HepG2 (cell line): ENCODE measurements at regions of chr18 and their contacts with region 1.

Region 1: DNA sequence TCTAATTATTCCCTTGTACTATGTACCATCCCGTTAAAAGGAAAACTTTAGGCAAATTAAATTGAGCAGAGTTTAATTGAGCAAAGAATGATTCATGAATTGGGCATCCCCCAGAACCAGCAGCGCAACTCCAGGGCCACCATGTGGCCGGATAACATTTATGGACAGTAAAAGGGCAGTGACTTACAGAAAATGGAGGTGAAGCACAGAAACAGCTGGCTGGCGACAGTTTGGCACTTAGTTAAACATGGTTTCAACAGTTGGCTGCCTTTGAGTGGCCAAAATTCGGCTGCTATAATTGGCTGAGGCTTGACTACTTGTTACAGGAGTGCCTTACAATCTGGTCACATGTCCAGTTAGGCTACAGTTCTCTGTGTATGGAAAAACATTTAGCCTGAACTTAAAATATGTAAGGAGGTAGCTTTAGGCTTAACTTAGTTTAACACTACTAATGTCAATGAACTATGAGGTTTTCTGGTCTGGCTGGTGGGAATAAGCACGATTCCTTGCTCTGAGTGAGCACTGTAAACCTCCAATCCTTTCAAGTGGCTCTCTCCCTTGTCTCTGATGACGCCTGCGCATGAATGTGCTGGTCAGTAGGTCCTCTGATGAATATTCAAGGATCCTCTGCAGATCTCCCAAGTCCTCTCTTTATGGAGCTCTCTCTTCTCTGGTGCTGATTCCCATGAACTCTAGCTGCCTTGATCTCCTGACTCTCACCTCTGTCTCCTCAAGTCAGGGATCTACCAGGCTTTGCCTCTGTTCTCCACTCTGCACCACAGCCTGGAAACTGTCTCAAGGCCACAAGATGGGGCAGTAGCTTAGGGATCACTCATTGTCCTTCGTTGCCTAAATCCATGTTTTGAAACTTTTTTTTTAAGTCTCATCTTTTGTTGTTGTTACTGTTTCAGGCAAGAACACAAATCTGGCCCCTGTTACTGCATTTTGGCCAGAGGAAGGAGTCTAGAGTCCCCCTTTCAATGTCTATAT is 24.4 kb upstream of the RAB31 start:
- DNase-seq: peak; percentile 26
- ATAC-seq: peak; percentile 83
- H3K4me3 ChIP-seq: no peak overlapping the region
- H3K27ac ChIP-seq: no peak overlapping the region
- H3K4me1 ChIP-seq: peaks cover 32% of the 10 kb centered on the region
- H3K27me3 ChIP-seq: peaks cover 0 to 8% of the 10 kb centered on the region in 2 experiments; a peak in 1 of 5 replicates
- CTCF ChIP-seq: peak; percentile 69
- EP300 ChIP-seq: no peak
- POLR2A ChIP-seq: no peak
- RAD21 ChIP-seq: 0 out of 2 replicates have a peak, but pooled peaks have one; percentile 19

Region 2: GRCh38 chr18:9594823-9595596 is 88.7 kb before region 1 on chr18:
- CTCF ChIA-PET with region 1: no interaction called
- POLR2A ChIA-PET with region 1: no interaction called
- in situ Hi-C with region 1: no loop called
- intact Hi-C with region 1: no loop called
- DNase-seq: no peak
- ATAC-seq: no peak
- H3K4me3 ChIP-seq: no peak overlapping the region
- H3K27ac ChIP-seq: peak overlapping the region; percentile 30
- H3K4me1 ChIP-seq: peaks cover 53% of the 10 kb centered on the region
- H3K27me3 ChIP-seq: no peaks in the 10 kb centered on the region
- CTCF ChIP-seq: no peak
- EP300 ChIP-seq: no peak
- POLR2A ChIP-seq: no peak
- RAD21 ChIP-seq: no peak

Region 3: DNA sequence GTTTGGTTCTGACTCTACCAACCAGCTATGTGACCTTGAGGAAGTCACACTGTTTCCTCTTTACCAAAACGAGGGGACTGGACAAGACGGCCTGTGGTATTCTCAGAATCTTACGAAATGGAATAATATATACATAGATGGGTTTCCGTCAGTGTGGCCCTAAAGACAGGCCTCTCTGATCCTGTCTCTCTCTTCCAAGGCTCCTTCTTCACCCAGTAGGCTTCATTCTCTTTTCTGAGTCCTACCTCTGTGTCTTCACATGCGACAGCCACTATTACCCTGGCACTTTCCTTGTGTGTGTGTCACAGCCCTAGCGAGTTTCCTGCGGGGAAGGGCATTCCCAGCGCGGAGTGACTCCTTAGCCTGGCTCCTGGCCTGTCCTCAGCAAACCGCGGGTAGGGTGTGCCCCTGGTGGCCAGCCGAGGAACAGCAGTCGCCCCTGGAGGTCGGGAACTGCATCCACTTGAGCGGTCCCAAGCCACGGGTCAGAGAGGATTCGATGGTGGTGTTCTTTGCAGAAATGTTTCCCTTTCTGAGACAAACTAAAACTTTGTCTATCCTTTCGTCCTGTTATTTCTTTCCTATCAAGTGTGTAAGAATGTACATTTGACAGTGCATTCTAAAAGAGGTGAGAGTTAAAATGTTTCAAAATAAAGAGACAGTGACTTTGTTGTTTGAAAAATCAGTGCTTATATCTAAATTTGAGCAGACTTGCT is 87.7 kb after region 1 on chr18:
- CTCF ChIA-PET with region 1: no interaction called
- POLR2A ChIA-PET with region 1: no interaction called
- in situ Hi-C with region 1: no loop called
- intact Hi-C with region 1: loop called (anchors 2 kb)
- DNase-seq: peak; percentile 53
- ATAC-seq: peak; percentile 99
- H3K4me3 ChIP-seq: peak overlapping the region in 1 of 3 experiments; percentile 51; a peak in 2 of 6 replicates
- H3K27ac ChIP-seq: no peak overlapping the region
- H3K4me1 ChIP-seq: peaks cover 17% of the 10 kb centered on the region
- H3K27me3 ChIP-seq: peaks cover 0 to 5% of the 10 kb centered on the region in 2 experiments; a peak in 1 of 5 replicates
- CTCF ChIP-seq: peak; percentile 96
- EP300 ChIP-seq: no peak
- POLR2A ChIP-seq: no peak
- RAD21 ChIP-seq: peak; percentile 90

Region 4: GRCh38 chr18:9792565-9793245 is 109.0 kb after region 1 on chr18:
- CTCF ChIA-PET with region 1: no interaction called
- POLR2A ChIA-PET with region 1: no interaction called
- in situ Hi-C with region 1: no loop called
- intact Hi-C with region 1: no loop called
- DNase-seq: peak; percentile 38
- ATAC-seq: peak; percentile 90
- H3K4me3 ChIP-seq: no peak overlapping the region
- H3K27ac ChIP-seq: no peak overlapping the region
- H3K4me1 ChIP-seq: no peaks in the 10 kb centered on the region
- H3K27me3 ChIP-seq: no peaks in the 10 kb centered on the region; a peak in 1 of 5 replicates
- CTCF ChIP-seq: peak; percentile 76
- EP300 ChIP-seq: no peak
- POLR2A ChIP-seq: no peak
- RAD21 ChIP-seq: peak; percentile 71

Region 5: DNA sequence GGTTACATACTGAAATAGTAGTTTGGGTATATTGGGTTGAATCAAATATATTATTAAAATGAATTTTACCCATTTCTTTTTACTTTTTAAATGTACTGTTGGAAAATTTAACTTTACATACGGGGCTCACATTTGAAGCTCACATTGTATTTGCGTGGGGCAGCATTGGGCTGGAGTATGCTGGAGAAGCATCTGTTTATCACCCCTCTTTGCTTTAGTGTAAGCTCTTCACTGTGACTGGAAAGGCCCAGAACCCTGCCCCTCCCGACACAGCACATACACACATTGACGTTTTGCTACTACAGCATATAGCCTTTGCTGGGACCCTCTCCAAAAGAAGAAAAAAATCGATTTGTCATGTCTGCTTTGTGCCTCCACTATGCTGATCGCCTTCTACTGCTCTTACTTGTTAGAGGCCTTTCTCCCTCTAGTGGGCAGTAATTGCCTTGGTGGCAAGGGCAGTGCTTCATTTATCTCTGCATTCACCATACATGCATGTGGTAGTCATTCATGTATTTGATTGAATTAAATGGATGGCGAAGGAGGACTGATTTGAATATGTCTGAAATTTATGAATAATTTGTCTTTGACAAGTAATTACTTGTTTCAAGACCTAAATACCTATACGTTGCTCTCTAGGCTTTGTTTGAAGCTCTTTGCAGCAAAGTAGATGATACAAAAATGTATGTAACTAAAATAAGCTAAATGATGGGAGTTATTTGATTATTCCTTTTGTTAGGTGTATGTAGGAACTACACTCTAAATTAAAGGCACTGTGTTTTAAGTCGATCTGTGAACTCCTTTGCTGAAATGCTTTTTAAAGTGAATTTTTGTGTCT is 267.5 kb after region 1 on chr18:
- CTCF ChIA-PET with region 1: no interaction called
- POLR2A ChIA-PET with region 1: no interaction called
- in situ Hi-C with region 1: no loop called
- intact Hi-C with region 1: loop called (anchors 10 kb)
- DNase-seq: peak; percentile 59
- ATAC-seq: peak; percentile 87
- H3K4me3 ChIP-seq: no peak overlapping the region
- H3K27ac ChIP-seq: no peak overlapping the region
- H3K4me1 ChIP-seq: peaks cover 15% of the 10 kb centered on the region
- H3K27me3 ChIP-seq: no peaks in the 10 kb centered on the region
- CTCF ChIP-seq: peak; percentile 68
- EP300 ChIP-seq: no peak
- POLR2A ChIP-seq: no peak
- RAD21 ChIP-seq: peak; percentile 40; the same call in 1 of the 2 replicates